ENCODE measurements at regions of chr6 and their contacts with region 1.

Region 1: DNA sequence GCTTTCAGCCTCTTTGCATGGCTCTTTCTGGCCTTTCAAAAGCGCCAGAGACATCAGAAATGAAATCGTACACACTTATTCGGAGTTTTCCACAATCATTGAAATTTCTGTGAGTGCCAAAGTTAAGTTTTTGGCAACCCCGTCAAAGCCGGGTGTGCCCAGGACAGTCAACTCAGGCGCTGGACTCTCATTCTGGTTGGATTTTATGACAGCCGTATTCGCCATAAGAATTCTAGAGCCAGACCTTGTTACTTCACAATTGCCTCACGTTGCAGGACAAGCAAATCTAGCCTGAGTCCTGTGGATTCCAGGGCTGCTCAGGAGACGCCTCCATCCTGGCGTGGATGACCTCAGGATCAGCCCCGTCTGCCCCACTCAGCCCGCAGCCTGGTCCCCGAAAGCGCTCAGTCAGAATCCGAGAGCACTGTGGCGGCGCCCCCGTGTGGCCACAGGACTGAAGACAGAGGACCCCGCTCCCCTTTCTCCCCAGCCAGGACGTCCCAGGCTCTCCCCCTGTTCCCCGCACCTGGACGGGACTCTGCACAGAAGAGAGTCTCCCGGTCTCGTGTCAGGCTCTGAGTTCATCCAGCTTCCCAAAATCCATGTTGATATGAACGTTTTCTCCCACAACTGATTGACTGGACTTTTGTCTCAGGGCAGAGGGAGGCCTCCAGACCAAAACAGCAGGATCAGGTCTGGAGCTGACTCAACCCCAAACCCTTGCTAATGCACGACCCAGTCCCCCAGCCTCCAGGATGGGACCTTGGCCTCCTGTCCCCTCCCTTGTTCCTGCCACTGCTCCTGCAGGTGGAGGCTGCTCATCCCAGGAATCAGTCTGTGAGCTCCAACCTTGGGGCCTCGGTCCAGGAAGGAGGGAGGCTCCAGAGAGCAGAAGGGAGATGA is 38.2 kb downstream of the MICA start:
- DNase-seq: peak; percentile 71
- H3K4me3 Mint-ChIP-seq: no peak overlapping the region
- H3K27ac Mint-ChIP-seq: no peak overlapping the region
- H3K4me1 Mint-ChIP-seq: peaks cover 5% of the 10 kb centered on the region
- H3K27me3 Mint-ChIP-seq: peaks cover 66% of the 10 kb centered on the region

Region 2: DNA sequence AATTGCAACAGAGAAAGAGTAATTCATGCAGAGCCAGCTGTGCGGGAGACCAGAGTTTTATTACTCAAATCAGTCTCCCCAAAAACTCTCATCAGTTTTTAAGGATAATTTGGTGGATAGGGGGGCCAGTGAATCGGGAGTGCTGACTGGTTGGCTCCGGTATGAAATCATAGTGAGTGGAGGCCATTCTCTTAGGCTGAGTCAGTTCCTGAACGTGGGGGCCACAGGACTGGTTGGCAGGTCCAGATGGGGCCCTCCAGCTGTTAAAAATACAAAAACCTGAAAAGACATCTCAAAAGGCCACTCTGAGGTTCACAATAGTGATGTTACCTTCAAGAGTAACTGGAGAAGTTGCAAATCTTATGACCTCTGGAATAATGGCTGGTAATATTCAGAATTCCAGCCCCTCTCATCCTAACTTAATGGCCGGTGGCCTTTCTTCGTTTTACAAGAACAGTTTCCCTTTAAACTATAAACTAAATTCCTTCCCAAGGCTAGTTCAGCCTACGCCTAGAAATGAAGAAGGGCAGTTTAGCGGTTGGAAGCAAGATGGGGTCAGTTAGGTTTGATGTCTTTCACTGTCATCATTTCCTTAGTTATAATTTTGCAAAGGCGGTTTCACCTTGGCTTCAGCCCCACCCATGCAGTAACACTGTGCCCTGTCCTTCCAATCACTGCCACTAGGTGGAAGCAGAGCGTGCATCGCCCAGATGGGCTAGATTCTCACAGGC is 45.0 kb before region 1 on chr6:
- intact Hi-C with region 1: loop called (anchors 1 kb)
- DNase-seq: peak; percentile 82
- H3K4me3 Mint-ChIP-seq: no peak overlapping the region
- H3K27ac Mint-ChIP-seq: no peak overlapping the region
- H3K4me1 Mint-ChIP-seq: peaks cover 26% of the 10 kb centered on the region
- H3K27me3 Mint-ChIP-seq: peaks cover 7% of the 10 kb centered on the region

Region 3: DNA sequence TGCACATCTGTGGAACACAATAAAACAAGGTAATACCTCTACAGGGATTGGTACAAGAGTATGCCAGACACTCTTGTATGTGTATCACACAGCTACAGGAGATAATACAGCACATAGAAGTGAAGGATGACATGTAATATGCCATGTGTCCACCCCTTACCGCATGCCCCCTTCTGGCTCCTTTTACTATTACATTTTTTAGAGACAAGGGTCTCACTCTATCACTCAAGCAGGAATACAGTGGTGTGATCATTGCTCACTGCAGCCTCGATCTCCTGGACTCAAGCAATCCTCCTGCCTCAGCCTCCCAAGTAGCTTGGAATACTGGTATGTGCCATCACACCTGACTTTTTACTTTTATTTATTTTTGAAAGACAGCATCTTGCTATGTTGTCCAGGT is 155.4 kb after region 1 on chr6:
- intact Hi-C with region 1: no loop called
- DNase-seq: no peak
- H3K4me3 Mint-ChIP-seq: no peak overlapping the region
- H3K27ac Mint-ChIP-seq: no peak overlapping the region
- H3K4me1 Mint-ChIP-seq: peaks cover 29% of the 10 kb centered on the region
- H3K27me3 Mint-ChIP-seq: no peaks in the 10 kb centered on the region